Left cardiac atrium (tissue), 4 donors: ENCODE measurements at regions of chr1 and their contacts with region 1.

Region 1: DNA sequence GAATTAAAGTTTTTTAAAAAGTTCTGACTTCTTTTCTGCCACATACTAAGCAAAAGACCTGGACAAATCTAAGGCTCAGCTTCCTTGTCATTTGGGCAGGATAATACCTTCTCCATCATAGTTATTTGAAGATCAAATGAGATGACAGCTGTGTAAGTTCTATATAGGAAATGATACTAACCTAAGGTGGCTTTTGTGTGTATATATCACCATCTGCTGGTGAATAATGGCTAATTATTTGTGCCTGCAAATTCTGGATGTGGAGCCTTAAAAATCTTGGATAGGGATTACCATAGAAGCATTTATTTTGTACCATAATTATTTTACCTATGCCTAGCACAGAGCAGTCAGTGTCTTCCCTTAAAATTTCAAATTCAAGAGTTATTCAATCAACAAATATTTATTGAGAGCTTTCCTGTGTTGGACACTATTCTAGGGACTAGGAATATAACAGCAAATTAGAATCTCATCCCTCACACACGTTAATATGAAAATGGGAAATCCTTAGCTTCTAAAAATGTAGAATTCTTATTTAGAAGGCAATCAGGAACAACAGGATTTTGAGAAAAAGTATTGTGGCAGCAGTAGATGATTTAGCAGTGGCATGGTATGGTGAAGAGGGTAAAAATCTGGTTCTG is 89.8 kb downstream of the TMEM200B start:
- DNase-seq: no peak
- ATAC-seq: peak; percentile 32 to 44

Region 2: GRCh38 chr1:28613175-28613574 is 420.8 kb before region 1 on chr1:
- intact Hi-C with region 1: no loop called
- DNase-seq: no peak
- ATAC-seq: no peak

Region 3: DNA sequence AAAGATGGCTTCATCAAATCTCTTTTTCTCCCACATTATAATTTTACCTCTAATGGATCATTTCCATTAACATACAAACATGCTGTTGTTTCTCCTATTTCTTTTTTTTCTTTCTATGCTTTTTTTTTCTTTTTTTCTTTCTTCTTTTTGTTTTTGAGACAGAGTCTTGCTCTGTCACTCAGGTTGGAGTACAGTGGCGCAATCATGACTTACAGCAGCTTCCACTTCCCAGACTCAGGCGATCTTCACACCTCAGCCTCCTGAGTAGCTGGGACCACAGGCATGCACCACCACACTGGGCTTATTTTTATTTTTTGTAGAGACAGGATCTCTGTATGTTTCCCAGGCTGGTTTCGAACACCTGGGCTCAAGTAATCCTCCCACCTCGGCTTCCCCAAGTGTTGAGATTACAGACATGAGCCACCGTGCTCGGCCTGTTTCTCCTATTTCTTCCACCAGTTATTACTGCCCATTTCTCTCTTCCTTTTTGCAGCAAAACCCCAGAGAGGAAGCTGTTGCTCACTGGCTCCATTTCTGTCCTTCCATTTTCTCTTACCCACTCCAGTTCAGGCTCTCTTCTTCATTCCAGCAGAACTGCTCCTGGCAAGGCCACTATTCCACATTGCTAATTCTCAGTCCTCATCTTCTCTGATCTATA is 254.1 kb before region 1 on chr1:
- intact Hi-C with region 1: loop called in 1 of 2 experiments (anchors 10 kb)
- DNase-seq: no peak
- ATAC-seq: no peak

Region 4: DNA sequence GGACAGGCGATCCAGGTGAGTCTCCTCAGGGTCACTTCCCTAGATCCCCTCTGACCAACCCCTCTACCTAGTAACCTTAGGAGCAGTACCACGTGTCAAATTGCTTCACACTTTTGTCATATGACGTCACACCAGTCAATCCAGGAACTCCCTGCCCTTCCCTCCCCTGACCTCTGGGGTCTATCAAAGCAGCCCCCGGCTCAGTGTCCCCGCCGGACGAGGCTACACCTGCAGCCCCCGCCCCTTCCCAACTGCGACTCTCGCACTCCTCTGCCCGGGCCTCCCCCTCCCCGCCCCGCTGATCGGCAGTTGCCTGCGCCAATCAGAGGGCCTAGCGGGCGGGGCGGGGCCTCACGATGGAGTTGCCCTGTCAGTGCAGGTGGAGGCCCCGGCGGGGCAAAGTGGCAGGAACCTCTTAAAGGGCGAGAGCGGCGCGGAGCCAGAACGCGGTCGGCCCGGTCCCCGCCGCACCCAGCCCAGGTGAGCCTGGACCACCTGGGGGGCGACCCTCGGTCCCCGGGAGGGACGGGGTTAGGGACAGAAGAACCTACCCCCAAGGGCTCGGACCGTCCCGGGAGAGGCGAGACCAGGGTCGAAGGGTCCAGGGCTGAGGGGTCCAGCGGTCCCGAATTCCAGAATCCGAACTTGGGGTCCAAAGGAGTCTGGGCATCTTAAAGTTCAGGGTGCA is 147.1 kb before region 1 on chr1:
- intact Hi-C with region 1: loop called (anchors 2 to 5 kb)
- DNase-seq: peak; percentile 87
- ATAC-seq: peak; percentile 83 to 87